Breast epithelium (tissue), 4 donors: ENCODE measurements at regions of chr2 and their contacts with region 1.

Region 1: GRCh38 chr2:133765658-133766057 is 197.4 kb upstream of the NCKAP5 start:
- DNase-seq: peak in 1 of 2 donors; percentile 57
- H3K4me3 ChIP-seq: no peak overlapping the region
- H3K27ac ChIP-seq: peak overlapping the region; percentile 41 to 44
- H3K4me1 ChIP-seq: peaks cover 5 to 11% of the 10 kb centered on the region in 2 donors
- H3K27me3 ChIP-seq: no peaks in the 10 kb centered on the region
- CTCF ChIP-seq: no peak
- POLR2A ChIP-seq: no peak

Region 2: DNA sequence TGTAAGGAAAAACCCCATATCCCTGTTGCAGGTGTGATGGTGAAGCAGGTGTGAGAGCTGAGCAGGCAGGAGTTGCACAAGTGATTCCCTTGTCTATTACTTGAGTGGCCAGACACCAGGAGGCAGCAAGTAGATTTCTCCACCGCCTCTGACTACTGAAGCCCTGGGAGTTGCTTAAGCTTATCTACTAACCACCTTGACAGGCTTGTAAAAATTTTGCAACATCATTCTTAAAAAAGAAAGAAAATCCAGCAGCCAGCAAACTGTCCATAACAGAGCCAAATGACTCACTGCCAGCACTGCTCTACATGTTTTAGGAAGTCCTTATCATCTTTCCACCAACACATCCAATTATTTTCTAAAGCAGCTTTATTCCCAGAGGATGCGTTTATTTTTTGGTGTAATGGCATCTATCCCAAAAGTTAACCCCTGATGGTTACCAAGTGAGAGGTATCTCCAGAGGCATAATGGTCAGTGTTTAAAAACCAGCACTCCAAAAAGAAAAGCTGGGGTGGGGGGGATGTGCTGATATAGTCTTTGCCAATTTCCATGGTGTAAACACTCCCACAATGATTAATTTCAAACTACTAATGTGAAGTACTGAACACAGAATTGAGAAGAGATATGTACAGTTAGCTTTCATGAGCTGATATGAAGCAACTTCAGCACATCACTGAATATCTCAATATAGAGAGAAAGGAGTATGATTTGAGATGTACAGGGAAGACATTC is 1365.3 kb before region 1 on chr2:
- intact Hi-C with region 1: no loop called
- DNase-seq: no peak
- H3K4me3 ChIP-seq: no peak overlapping the region
- H3K27ac ChIP-seq: no peak overlapping the region
- H3K4me1 ChIP-seq: no peaks in the 10 kb centered on the region
- H3K27me3 ChIP-seq: no peaks in the 10 kb centered on the region
- CTCF ChIP-seq: no peak
- POLR2A ChIP-seq: no peak

Region 3: DNA sequence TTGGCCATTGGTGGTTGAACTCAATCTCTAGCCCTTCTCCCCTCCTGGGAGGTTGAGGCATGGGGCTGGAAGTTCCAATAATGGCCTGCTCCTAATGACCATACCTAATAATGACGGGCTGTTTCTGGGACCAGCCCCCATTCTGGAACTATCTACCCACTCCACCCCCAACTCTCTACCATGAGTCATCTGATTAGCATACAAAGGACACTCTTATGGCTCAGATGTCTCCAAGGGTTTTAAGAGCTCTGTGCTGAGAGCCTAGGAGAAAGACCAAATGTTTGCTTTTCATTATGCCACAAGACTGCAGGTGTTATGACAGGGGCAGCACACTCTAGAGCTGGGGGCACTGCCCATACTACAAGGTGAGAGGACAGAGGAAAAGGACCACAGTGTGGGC is 60.4 kb before region 1 on chr2:
- intact Hi-C with region 1: no loop called
- DNase-seq: no peak
- H3K4me3 ChIP-seq: no peak overlapping the region
- H3K27ac ChIP-seq: no peak overlapping the region
- H3K4me1 ChIP-seq: no peaks in the 10 kb centered on the region
- H3K27me3 ChIP-seq: no peaks in the 10 kb centered on the region
- CTCF ChIP-seq: no peak
- POLR2A ChIP-seq: no peak

Region 4: GRCh38 chr2:133792223-133792622 is 26.6 kb after region 1 on chr2:
- intact Hi-C with region 1: loop called (anchors 2 kb)
- DNase-seq: no peak
- H3K4me3 ChIP-seq: no peak overlapping the region
- H3K27ac ChIP-seq: no peak overlapping the region
- H3K4me1 ChIP-seq: no peaks in the 10 kb centered on the region
- H3K27me3 ChIP-seq: no peaks in the 10 kb centered on the region
- CTCF ChIP-seq: no peak
- POLR2A ChIP-seq: no peak